GM10248 (cell line): ENCODE measurements at regions of chr14 and their contacts with region 1.

Region 1: GRCh38 chr14:22852940-22853767 is 16.8 kb downstream of the MMP14 start:
- DNase-seq: peak; percentile 87
- CTCF ChIP-seq: peak; percentile 86

Region 2: GRCh38 chr14:22112004-22112403 is 741.1 kb before region 1 on chr14:
- CTCF ChIA-PET with region 1: no interaction called
- POLR2A ChIA-PET with region 1: no interaction called
- DNase-seq: peak; percentile 29
- CTCF ChIP-seq: peak; percentile 49

Region 3: GRCh38 chr14:22653012-22653621 is 200.0 kb before region 1 on chr14:
- CTCF ChIA-PET with region 1: interaction called, 62 read pairs
- POLR2A ChIA-PET with region 1: no interaction called
- DNase-seq: peak; percentile 68
- CTCF ChIP-seq: peak; percentile 81

Region 4: GRCh38 chr14:22781586-22781991 is 71.6 kb before region 1 on chr14:
- CTCF ChIA-PET with region 1: interaction called, 68 read pairs
- POLR2A ChIA-PET with region 1: no interaction called
- DNase-seq: no peak
- CTCF ChIP-seq: no peak

Region 5: DNA sequence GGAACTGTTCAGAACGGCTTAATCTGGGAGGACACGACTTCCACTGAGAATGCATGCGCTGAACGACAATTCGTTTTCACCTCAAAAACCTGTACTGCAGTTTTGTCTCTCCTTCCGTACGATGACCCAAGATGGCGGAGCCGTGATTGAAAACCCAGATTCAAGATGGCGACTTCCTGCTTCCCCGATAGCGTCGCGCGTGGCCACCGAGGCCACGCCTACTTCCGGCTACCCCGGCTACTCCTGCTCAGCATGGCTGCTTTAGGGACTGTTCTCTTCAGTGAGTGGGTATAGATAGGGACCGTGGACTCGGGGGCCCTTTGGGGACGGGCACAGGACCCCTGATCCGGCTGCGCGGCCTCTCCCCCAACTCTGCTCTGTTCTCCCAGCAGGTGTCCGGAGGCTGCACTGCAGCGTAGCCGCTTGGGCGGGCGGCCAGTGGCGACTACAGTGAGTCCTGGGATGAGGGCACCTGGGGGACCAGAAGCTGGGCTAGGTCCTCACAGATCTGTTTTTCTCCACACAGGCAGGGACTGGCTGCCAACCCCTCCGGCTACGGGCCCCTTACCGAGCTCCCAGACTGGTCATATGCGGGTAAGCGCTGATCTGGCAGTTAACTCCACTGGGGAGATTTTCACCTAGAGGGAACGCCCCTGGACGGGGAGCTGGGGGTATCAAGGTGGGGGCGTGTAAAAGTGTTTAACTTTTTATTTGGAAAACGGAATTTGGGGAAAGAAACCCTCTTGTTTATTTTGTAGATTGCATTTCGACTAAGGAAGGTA is 23.3 kb before region 1 on chr14 and contains the start of gene MRPL52:
- CTCF ChIA-PET with region 1: interaction called, 262 read pairs
- POLR2A ChIA-PET with region 1: no interaction called
- DNase-seq: peak; percentile 93
- CTCF ChIP-seq: no peak

Region 6: GRCh38 chr14:22865424-22866405 is 12.6 kb after region 1 on chr14:
- CTCF ChIA-PET with region 1: interaction called, 76 read pairs
- POLR2A ChIA-PET with region 1: no interaction called
- DNase-seq: no peak
- CTCF ChIP-seq: no peak

Region 7: GRCh38 chr14:22886500-22887259 is 33.5 kb after region 1 on chr14:
- CTCF ChIA-PET with region 1: interaction called, 38 read pairs
- POLR2A ChIA-PET with region 1: no interaction called
- DNase-seq: peak; percentile 89
- CTCF ChIP-seq: peak; percentile 40

Region 8: DNA sequence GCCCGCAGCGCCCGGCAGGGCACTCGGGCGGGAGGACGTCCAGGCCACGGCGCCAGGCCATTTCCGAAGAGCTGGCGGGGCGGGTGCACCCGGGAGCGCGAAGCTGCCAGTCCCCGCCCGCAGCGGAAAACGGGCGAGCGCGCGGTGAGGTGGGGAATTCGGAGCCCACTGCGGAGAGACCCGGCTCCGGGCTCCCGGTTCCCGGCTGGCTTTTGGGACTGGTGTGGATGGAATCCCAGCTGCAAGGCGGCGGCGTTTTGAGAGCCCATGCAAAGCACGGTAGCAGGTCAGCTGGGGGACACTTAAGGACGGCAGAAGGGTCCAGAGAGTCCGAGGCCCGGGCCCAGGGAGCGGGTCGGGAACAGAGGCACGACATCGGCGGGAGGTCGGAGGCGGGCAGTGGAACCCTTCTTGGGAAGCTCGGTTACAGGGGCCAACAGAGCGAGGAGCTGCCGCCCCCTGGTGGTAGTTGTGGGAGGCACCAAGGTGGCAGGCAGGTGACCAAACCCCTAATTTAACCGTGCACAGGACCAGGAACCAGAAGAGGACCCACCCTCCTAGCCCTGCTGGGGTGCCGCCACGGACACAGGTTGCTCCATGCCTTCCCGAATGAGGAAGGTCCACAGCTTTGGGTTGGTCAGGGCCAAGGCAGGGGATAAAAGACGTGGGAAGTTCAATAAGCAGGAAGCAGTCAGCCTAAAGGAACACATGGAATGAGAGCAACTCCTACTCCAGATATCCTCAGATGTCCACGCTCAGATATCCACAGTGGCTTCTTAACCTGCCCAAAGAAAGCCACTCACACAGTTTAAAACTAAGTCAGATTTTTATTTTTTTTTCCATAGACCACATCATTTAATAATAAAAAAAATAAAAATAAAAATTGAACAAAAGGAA is 204.9 kb after region 1 on chr14:
- CTCF ChIA-PET with region 1: no interaction called
- POLR2A ChIA-PET with region 1: no interaction called
- DNase-seq: peak; percentile 90
- CTCF ChIP-seq: peak; percentile 96